ENCODE measurements at regions of chr11 and their contacts with region 1.

Region 1: GRCh38 chr11:2151500-2152257 is 9.3 kb downstream of the INS start:
- DNase-seq: peak; percentile 84
- CTCF ChIP-seq: peak; percentile 88

Region 2: DNA sequence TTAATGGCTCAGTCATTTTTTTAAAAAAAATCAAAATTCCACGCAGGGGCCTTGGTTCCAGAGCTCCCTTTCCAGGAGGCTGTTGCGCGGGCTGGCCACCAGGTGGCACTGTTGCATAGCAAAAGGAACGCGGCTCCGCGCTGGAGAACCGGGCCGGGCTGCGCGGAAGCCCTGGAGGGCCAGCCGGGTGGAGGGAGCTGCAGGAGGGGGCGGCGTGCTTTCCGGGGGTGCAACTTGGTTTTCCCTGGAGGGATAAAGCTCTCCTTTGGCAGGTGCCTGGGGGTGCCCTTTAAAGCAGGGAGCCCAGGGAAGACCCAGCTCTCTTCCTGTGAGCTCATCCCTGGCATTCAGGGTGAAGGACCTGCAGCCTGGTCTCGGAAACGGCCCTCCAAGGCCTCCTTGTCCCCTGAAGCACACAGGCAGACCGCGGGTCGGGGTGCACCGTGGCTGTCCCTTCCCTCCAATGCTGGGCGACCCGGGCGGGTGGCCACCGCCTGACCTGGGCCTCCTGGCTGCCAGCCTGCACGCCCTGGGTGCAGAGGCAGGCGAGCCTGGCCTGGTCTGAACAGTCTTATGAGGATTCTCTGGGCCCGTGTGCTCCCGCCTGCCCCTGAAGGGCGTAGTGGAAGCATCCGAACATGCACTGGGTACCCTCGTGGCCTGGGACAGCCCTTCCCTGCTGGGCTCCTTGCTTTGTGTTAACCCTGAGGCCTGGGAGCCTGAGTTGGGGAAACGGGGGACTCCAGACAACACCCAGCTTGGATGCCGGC is 498.7 kb before region 1 on chr11:
- CTCF ChIA-PET with region 1: interaction called, 72 read pairs
- POLR2A ChIA-PET with region 1: no interaction called
- DNase-seq: peak; percentile 90
- CTCF ChIP-seq: peak; percentile 97

Region 3: GRCh38 chr11:1882519-1883238 is 269.0 kb before region 1 on chr11:
- CTCF ChIA-PET with region 1: interaction called, 21 read pairs
- POLR2A ChIA-PET with region 1: no interaction called
- DNase-seq: peak; percentile 90
- CTCF ChIP-seq: peak; percentile 96

Region 4: GRCh38 chr11:2027708-2028107 is 124.0 kb before region 1 on chr11:
- CTCF ChIA-PET with region 1: interaction called, 561 read pairs
- POLR2A ChIA-PET with region 1: no interaction called
- DNase-seq: no peak
- CTCF ChIP-seq: no peak

Region 5: GRCh38 chr11:2103668-2104523 is 47.8 kb before region 1 on chr11:
- CTCF ChIA-PET with region 1: interaction called, 13 read pairs
- POLR2A ChIA-PET with region 1: no interaction called
- DNase-seq: no peak
- CTCF ChIP-seq: no peak

Region 6: GRCh38 chr11:2169025-2169378 is 17.3 kb after region 1 on chr11:
- CTCF ChIA-PET with region 1: interaction called, 20 read pairs
- POLR2A ChIA-PET with region 1: no interaction called
- DNase-seq: no peak
- CTCF ChIP-seq: no peak